ENCODE measurements at regions of chr9 and their contacts with region 1.

Region 1: DNA sequence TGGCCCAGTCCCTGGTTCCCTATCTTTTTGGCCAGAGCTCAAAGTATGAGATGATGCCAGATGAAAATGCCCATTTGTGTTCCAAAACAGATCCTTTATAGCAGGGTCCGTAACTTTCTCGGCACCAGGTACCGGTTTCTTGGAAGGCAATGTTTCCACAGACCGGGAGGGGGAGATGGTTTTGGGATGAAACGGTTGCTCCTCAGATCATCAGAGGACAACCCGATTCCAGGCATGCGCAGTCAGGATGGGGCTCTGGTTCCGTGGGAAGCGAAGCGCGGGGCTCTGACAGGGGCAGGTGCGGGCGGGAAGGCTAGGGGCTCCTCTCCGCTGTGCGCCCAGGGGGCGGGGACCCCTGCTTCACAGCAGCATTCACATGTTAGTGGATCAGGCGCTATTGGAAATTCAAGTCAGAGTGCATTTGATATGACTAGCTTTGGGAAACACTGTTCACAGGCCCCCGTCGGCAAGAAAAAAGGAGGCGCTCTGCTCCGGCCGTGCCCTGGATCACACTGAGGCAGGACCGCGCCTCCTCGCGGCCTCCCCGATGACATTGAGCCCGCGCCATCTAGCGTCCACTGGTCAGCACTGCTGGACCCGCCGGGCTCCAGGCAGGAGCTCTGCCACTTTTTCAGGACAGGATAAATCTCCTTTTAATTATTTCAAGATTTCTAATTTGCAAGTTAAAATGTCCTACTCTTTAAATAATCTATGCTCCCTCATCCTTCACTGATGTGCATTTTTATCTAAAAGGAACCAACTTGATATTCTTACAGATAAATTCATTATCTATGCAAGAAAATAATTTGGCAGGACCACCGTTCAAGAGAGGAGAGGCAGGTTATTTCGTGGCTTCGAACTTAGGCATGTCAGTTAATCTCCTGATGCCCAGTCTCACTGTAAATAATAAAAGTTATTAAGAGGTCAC is 190.0 kb downstream of the FANCC start:
- DNase-seq: peak; percentile 88 to 93 (median 90)
- H3K4me3 ChIP-seq: peak overlapping the region; percentile 27 to 75 (median 58)
- H3K27ac ChIP-seq: peak overlapping the region in 52 of 59 donors; percentile 9 to 92 (median 77)
- H3K27me3 ChIP-seq: no peaks in the 10 kb centered on the region
- CTCF ChIP-seq: peak; percentile 76 to 100 (median 99)

Region 2: DNA sequence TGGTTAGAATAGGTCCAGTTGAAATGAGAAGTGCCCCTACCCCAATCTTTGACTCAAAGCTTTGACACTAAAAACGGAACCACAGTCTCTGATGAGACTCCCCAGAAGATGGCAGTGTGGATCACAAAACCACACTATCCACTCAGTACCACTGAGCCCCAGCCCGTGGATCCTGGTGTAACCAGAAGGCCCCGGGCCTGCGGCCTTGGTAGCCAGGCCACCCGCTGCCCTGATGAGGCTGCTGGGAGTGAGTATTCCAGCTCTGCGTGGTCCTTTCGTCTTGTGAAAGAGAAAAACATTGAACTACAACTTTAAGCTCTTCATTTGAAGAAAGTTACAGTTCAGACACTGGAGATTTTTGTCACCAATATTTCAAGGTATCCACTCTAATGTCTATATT is 446.0 kb before region 1 on chr9:
- intact Hi-C with region 1: loop called in 1 of 2 experiments (anchors 2 kb)
- DNase-seq: peak; percentile 70 to 88 (median 80)
- H3K4me3 ChIP-seq: peak overlapping the region in 6 of 59 donors; percentile 8 to 27 (median 23)
- H3K27ac ChIP-seq: peak overlapping the region in 45 of 59 donors; percentile 4 to 83 (median 56)
- H3K27me3 ChIP-seq: no peaks in the 10 kb centered on the region
- CTCF ChIP-seq: peak; percentile 32 to 96 (median 86)

Region 3: DNA sequence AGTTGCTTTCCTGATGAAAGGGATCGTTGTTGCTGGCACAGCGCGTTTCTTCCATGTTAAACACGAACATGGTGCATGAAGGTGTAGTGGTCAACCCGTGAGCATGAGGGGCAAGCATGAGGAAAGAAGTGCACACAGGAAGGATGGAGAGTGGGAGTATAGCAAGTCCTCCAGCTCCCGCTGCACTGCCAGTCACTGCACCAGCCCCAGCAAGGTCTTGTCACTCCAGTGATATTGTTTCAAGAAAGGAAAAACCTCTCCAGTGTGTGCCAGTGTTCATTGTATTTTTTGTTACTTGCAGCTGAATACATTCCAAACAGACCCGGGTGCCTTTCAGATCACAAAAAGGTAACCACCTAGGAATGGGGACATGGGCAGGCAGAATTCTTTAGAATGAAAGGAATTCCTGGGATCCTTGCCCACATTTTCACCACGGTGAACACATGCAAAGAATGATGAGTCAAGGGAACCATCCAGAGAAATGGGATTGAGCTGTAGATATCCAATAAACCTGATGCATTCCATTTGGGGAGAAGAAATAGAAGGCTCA is 214.7 kb before region 1 on chr9:
- intact Hi-C with region 1: loop called in 1 of 2 experiments (anchors 5 kb)
- DNase-seq: peak in 1 of 10 donors; percentile 7
- H3K4me3 ChIP-seq: no peak overlapping the region
- H3K27ac ChIP-seq: peak overlapping the region; percentile 78 to 100 (median 94)
- H3K27me3 ChIP-seq: no peaks in the 10 kb centered on the region
- CTCF ChIP-seq: no peak

Region 4: DNA sequence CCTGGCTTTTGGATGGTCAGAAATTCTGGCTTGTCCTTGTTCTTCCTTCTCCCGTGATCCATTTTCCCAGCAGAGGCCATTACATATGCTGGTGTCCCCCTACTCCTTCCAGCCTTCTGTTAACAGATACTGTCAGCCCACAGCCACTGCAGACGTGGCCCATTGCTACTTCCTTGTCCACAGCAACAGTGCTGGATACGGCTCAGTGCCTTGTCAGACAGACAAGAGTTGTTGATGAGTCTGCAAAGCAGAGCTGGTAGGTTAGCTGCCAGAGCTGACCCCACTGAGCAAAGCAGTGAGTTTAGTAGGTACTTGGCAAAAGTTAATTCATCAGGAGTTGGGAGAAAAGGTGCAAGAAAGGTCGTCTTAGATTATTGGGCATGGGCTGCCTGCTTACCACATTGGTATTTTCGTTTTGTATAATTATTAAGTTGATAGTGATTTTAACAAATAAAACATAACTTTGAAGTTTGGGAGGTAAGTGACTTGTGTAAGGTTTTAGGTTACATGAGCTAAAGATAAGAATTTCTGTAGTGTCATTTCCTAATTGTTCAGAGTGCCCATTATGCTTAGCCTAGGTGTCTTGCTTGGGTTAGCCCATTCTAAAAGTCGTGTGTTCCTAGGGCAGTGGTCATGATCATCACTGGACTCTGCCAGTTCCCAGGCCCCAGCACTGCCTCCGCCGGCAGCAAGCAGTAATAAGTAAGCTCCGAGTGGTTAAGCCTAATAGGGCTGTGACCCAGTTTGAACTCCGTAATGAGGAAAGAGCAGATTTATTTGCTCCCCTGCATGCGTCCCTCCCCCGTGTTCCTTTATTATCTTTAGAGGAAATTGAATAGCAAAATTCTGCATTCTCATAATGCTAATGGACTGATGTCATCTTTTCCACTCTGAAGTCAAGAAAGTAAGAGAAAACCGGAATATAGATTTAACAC is 102.0 kb before region 1 on chr9:
- intact Hi-C with region 1: loop called in 1 of 2 experiments (anchors 10 kb)
- DNase-seq: peak in 2 of 10 donors; percentile 53 to 64
- H3K4me3 ChIP-seq: peak overlapping the region in 5 of 59 donors; percentile 2 to 25 (median 16)
- H3K27ac ChIP-seq: peak overlapping the region in 56 of 59 donors; percentile 0 to 98 (median 82)
- H3K27me3 ChIP-seq: no peaks in the 10 kb centered on the region
- CTCF ChIP-seq: peak in 32 of 56 donors; percentile 12 to 51 (median 32)

Region 5: GRCh38 chr9:95065224-95065623 is 62.3 kb before region 1 on chr9:
- intact Hi-C with region 1: no loop called
- DNase-seq: peak in 2 of 10 donors; percentile 62 to 65
- H3K4me3 ChIP-seq: peak overlapping the region in 1 of 59 donors; percentile 12
- H3K27ac ChIP-seq: peak overlapping the region; percentile 46 to 100 (median 88)
- H3K27me3 ChIP-seq: no peaks in the 10 kb centered on the region
- CTCF ChIP-seq: peak in 3 of 56 donors; percentile 6 to 17 (median 14)

Region 6: DNA sequence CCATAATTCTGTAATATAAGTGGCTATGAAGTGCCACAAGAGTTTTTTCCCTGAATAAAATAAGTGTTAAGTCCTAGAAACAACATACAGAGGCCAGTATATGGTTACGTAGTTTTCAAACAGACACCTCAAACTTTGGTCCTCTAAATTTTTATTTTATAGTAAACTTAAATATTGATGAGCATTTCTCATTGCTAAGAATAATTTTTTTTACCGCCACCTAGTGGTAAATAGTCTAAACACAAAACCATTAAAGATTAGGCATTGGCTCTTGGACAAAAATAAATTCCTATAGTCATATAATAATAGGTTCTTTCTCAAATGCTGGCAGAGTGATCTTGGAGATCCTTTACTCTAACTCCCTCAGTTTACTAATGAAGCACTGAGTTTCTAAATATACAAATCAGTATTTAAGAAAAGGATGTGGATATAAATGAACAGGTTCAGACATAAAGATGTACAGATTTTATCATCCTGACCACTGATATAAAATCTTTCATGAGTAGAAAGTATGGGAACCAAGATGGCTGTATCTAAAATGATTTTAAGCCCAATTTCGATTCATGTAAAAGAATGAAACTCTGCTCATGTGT is 53.8 kb after region 1 on chr9:
- intact Hi-C with region 1: loop called in 1 of 2 experiments (anchors 10 kb)
- DNase-seq: no peak
- H3K4me3 ChIP-seq: no peak overlapping the region
- H3K27ac ChIP-seq: no peak overlapping the region
- H3K27me3 ChIP-seq: no peaks in the 10 kb centered on the region
- CTCF ChIP-seq: peak in 55 of 56 donors; percentile 37 to 72 (median 56)